ENCODE measurements at regions of chr12 and their contacts with region 1.

Region 1: GRCh38 chr12:46661110-46661845 is 164.5 kb downstream of the SLC38A4 start:
- DNase-seq: no peak
- H3K4me3 ChIP-seq: peak overlapping the region in 1 of 4 donors; percentile 37
- H3K27ac ChIP-seq: peak overlapping the region; percentile 78 to 87 (median 84)
- H3K4me1 ChIP-seq: peaks cover 11 to 84% (median 55%) of the 10 kb centered on the region in 3 donors
- H3K27me3 ChIP-seq: no peaks in the 10 kb centered on the region
- CTCF ChIP-seq: peak; percentile 73 to 89 (median 81)
- POLR2A ChIP-seq: no peak

Region 2: GRCh38 chr12:46382964-46383653 is 278.2 kb before region 1 on chr12:
- intact Hi-C with region 1: loop called (anchors 5 kb)
- DNase-seq: peak; percentile 69
- H3K4me3 ChIP-seq: peak overlapping the region; percentile 58 to 82 (median 73)
- H3K27ac ChIP-seq: peak overlapping the region; percentile 96 to 100 (median 99)
- H3K4me1 ChIP-seq: peaks cover 42 to 53% (median 45%) of the 10 kb centered on the region in 3 donors
- H3K27me3 ChIP-seq: no peaks in the 10 kb centered on the region
- CTCF ChIP-seq: peak in 3 of 6 experiments; percentile 24 to 32 (median 30)
- POLR2A ChIP-seq: peak in 3 of 4 donors; percentile 37 to 91 (median 78)

Region 3: DNA sequence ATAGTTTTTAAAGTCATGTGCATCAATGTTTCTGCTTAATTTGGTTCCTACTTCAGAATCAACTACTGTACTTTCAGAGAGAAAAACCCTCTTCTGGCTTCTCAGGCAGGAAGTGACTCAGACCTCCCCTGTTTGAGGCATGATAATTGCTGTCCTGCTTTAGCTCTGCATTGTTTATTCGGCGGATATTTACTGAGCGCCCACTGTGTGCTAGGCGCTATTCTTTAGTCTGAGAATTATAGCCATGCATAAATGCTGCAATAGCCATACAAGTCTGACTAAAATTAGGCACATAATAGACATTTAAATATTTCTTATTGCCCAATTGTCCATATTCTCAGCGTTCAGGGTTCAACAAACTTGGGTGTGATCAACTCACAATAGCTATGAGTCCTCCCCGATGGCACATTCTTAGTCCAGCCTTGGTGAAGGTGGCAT is 424.6 kb after region 1 on chr12:
- intact Hi-C with region 1: no loop called
- DNase-seq: no peak
- H3K4me3 ChIP-seq: no peak overlapping the region
- H3K27ac ChIP-seq: peak overlapping the region in 2 of 4 donors; percentile 37 to 58
- H3K4me1 ChIP-seq: peaks cover 13 to 77% (median 31%) of the 10 kb centered on the region in 3 donors
- H3K27me3 ChIP-seq: no peaks in the 10 kb centered on the region
- CTCF ChIP-seq: no peak
- POLR2A ChIP-seq: no peak

Measured in esophagus squamous epithelium (tissue), 5 donors.